ENCODE measurements at regions of chrX and their contacts with region 1.

Region 1: DNA sequence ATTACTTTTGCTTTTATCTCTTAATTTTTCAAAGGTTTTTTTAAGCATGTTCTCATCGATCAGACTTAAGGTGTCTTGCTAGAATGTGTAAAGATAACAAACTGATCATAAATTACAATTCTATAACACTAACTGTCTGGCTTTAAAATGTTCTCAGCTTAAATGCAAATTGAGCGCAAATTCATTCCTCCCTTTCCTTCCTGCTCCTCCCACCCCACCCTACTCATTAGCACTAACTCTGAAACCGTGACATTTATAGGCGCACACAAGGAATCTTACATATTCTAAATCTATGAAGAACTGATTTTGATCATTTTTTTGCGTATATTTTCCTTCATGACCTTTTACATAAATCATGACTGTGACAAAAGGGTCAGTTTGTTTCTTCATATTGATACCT is 590.0 kb upstream of the DIAPH2 start:
- DNase-seq: no peak
- H3K4me3 Mint-ChIP-seq: no peak overlapping the region
- H3K27ac Mint-ChIP-seq: no peak overlapping the region
- H3K4me1 Mint-ChIP-seq: no peaks in the 10 kb centered on the region
- H3K27me3 Mint-ChIP-seq: peaks cover 17% of the 10 kb centered on the region
- CTCF ChIP-seq: no peak

Region 2: GRCh38 chrX:95791876-95792275 is 302.7 kb before region 1 on chrX:
- CTCF ChIA-PET with region 1: no interaction called
- POLR2A ChIA-PET with region 1: no interaction called
- intact Hi-C with region 1: no loop called
- DNase-seq: no peak
- H3K4me3 Mint-ChIP-seq: no peak overlapping the region
- H3K27ac Mint-ChIP-seq: no peak overlapping the region
- H3K4me1 Mint-ChIP-seq: no peaks in the 10 kb centered on the region
- H3K27me3 Mint-ChIP-seq: peaks cover 15% of the 10 kb centered on the region
- CTCF ChIP-seq: no peak

Region 3: DNA sequence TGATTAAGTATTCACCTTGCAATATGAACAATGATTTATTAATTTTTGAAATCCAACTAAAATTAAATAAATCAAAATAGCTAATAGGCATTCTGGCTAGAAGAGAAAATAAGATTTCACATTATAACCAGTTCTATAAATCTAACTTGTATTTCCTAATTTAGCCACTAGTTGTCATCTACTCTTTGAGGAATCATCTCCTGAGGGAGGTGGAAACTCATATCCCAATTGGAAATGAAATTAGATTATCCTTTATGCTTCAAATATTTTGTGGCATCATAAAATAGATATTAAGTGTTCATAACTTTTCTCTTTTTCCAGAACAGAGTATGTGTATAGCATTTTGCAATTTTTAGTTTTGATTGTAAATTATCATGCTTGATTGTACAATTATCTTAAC is 31.6 kb after region 1 on chrX:
- CTCF ChIA-PET with region 1: no interaction called
- POLR2A ChIA-PET with region 1: no interaction called
- intact Hi-C with region 1: loop called (anchors 1 kb)
- DNase-seq: no peak
- H3K4me3 Mint-ChIP-seq: no peak overlapping the region
- H3K27ac Mint-ChIP-seq: no peak overlapping the region
- H3K4me1 Mint-ChIP-seq: no peaks in the 10 kb centered on the region
- H3K27me3 Mint-ChIP-seq: no peaks in the 10 kb centered on the region
- CTCF ChIP-seq: no peak